AG04450 (cell line): ENCODE measurements at regions of chr14 and their contacts with region 1.

Region 1: DNA sequence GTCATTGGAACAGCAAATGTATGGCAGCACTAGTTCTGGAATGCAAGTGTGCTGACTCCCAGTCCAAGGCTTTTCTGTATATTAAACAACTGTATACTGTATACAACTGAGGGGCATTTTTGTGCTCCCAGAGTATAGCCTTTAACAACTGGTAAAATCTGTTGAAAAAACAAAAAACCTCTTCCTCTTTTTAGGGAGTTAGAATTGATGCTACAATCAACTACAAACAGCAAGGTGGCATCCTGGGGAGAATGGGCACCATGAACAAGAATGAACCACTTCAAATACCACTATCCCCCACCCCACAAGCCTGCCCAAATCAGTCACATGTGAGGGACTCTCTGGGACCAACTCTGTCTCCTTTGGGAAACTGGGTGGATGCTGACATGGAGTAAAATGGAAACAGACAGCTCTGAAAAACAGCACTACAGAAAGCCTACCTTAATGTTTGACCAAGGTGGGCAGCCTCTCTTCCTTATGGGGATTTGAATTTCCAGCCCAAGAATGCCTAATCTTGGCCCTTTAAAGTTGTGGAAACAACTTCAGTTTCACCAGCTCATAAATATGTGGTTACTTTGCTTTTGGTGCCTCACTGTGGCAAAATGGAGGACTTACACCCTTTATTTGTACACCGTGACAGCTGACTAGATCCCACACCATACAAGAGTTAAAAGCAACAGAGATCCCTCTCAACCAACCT is 7.5 kb downstream of the VTI1B start:
- DNase-seq: peak; percentile 43
- H3K4me3 ChIP-seq: no peak overlapping the region
- H3K27ac ChIP-seq: no peak overlapping the region
- H3K27me3 ChIP-seq: no peaks in the 10 kb centered on the region
- CTCF ChIP-seq: peak; percentile 70

Region 2: GRCh38 chr14:67426983-67427606 is 239.8 kb before region 1 on chr14:
- CTCF ChIA-PET with region 1: interaction called, 36 read pairs
- POLR2A ChIA-PET with region 1: no interaction called
- DNase-seq: peak; percentile 45
- H3K4me3 ChIP-seq: no peak overlapping the region
- H3K27ac ChIP-seq: no peak overlapping the region
- H3K27me3 ChIP-seq: peaks cover 10% of the 10 kb centered on the region
- CTCF ChIP-seq: peak; percentile 86

Region 3: DNA sequence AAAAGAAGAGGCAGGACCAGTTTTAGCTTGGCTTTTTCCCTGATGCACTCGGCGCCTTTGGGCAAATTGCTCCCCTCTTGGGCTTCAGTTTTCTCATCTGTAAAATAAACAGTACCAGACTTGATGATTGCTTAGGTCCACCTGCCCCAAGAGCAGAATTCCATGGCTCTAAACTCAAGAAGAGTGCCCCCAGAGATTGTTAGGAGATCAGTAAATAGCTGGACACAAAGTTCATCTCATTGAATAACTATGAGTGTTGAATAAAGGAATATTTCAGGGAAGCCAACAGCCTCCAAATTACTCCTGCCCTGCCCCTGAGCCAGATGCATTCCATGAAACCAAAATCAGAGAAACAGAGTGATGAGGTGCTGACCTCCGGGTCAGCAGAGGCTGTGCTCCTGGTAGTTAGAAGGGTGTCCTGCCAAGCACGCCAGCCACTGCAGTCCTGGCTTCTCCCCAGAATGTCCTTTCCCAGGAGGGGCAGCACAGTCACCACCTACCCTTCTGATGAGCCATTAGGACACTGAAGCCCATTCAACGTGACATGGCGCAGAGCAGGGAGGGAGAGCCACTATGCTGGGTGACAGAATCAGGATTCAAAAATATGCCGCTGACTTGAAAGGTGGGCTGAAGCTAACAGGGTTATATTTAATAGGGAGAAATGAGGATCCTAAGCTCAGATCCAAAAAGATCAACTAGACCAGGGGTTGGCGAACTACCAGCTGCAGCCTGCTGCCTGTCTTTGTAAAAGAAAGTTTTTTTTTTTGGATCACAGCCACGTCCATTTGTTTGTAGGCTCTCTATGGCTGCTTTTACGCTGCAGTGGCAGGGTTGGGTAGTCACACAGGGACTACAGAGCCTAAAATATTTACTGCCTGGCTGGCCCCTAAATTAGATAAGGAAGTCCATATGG is 220.5 kb before region 1 on chr14:
- CTCF ChIA-PET with region 1: no interaction called
- POLR2A ChIA-PET with region 1: no interaction called
- DNase-seq: no peak
- H3K4me3 ChIP-seq: no peak overlapping the region
- H3K27ac ChIP-seq: no peak overlapping the region
- H3K27me3 ChIP-seq: peaks cover 11% of the 10 kb centered on the region
- CTCF ChIP-seq: no peak

Region 4: DNA sequence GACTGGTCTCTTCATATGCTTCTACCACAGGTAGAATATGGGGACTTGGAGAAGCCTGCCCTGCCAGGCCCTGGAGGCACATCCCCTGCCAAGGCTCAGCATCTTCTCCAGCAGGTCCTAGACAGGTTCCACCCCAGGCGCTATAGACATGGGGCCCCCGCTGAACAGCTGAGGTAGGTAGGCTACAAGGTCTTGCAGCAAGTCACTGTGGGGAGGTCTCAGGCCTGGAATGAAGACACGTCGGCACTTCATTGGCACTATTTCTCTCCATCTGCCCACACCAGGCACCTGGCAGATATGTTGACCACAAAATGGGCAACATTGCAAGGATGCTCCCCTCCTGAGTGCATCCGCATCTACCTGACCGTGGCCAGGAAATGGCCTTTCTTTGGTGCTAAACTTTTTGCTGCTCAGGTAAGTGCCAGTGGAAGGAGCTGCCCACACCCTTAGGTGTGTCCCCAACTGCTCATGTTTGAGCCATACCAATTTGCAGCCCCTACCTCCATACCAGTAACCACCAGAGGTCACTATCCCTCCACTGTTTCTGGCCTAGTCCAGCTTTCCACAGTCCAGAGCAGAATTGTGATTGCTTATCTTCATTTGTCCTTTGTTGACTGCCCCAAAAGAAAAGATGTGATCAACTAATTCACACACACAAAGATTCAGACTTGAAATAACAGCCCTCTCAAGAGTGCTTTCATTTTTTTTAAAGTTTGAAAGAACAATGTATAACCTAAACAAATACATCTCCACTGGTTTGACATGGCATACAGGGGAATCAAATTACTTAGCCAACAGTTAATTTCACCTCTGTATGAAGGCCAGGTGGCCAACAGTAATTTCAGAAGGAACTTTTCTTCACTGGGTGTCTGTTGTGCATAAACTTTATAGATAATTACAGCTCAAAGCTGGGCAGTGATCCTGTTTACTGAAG is 82.9 kb before region 1 on chr14:
- CTCF ChIA-PET with region 1: interaction called, 86 read pairs
- POLR2A ChIA-PET with region 1: no interaction called
- DNase-seq: no peak
- H3K4me3 ChIP-seq: no peak overlapping the region
- H3K27ac ChIP-seq: no peak overlapping the region
- H3K27me3 ChIP-seq: peaks cover 5% of the 10 kb centered on the region
- CTCF ChIP-seq: peak; percentile 85

Region 5: DNA sequence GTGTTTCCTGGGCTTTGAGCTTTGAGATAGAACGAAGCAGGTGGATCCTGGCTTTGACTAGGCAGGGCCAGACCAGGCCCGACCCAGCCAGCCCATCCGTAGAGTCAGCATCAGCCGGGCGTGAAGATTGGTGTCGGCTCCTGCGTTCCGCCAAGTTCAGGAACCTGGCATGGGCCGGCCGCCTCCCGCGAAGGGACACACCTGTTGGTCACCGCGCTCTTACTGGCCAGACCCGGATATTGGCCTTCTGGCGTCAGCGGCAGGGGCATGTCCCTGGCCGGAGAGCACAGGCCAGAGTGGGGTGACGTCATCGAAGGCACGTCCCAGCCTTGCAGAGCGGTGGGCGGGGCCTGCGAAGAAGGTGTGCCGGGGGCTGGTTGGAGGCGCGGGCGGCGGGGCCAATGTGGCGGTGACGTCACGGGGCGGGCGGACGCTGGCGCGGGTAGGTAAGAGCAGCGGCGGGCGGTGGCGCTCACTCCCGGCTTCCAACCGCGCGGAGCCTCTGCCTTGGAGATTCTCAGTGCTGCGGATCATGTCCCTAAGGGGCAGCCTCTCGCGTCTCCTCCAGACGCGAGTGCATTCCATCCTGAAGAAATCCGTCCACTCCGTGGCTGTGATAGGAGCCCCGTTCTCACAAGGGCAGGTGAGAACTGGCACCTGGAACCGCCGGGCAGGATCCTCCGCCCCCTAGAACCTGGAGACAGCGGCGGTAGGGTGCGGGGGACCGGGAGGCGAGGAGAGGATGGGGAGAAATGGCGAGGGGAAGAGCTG is 47.3 kb before region 1 on chr14 and contains the start of gene ARG2:
- CTCF ChIA-PET with region 1: interaction called, 125 read pairs
- POLR2A ChIA-PET with region 1: no interaction called
- DNase-seq: peak; percentile 61
- H3K4me3 ChIP-seq: peak within 1 kb of the TSS; percentile 67
- H3K27ac ChIP-seq: no peak within 1 kb of the TSS
- H3K27me3 ChIP-seq: no peaks in the 10 kb centered on the region
- CTCF ChIP-seq: no peak
- polyA plus RNA-seq, gene ARG2: 2.6 TPM in 2 replicates

Region 6: GRCh38 chr14:67650694-67651093 is 16.2 kb before region 1 on chr14:
- CTCF ChIA-PET with region 1: interaction called, 28 read pairs
- POLR2A ChIA-PET with region 1: no interaction called
- DNase-seq: no peak
- H3K4me3 ChIP-seq: no peak overlapping the region
- H3K27ac ChIP-seq: no peak overlapping the region
- H3K27me3 ChIP-seq: no peaks in the 10 kb centered on the region
- CTCF ChIP-seq: no peak